PC-3 (cell line): ENCODE measurements at regions of chr5 and their contacts with region 1.

Region 1: GRCh38 chr5:112860929-112861637 is at the start of gene SRP19:
- DNase-seq: peak; percentile 94
- ATAC-seq: peak; percentile 91
- H3K4me3 ChIP-seq: peak within 1 kb of the TSS; percentile 98
- H3K27ac ChIP-seq: peak within 1 kb of the TSS; percentile 41
- H3K4me1 ChIP-seq: peaks cover 16% of the 10 kb centered on the region
- H3K27me3 ChIP-seq: no peaks in the 10 kb centered on the region
- CTCF ChIP-seq: no peak
- total RNA-seq, gene SRP19: 39.9 and 42.9 TPM in 2 replicates

Region 2: GRCh38 chr5:112711436-112711835 is 149.6 kb before region 1 on chr5:
- CTCF ChIA-PET with region 1: no interaction called
- POLR2A ChIA-PET with region 1: no interaction called
- intact Hi-C with region 1: no loop called
- DNase-seq: no peak
- ATAC-seq: no peak
- H3K4me3 ChIP-seq: no peak overlapping the region
- H3K27ac ChIP-seq: no peak overlapping the region
- H3K4me1 ChIP-seq: peaks cover 13% of the 10 kb centered on the region
- H3K27me3 ChIP-seq: no peaks in the 10 kb centered on the region
- CTCF ChIP-seq: no peak

Region 3: GRCh38 chr5:112976432-112977309 is 115.6 kb after region 1 on chr5 and contains the start of gene DCP2:
- CTCF ChIA-PET with region 1: no interaction called
- POLR2A ChIA-PET with region 1: no interaction called
- intact Hi-C with region 1: loop called (anchors 5 kb)
- DNase-seq: peak; percentile 96
- ATAC-seq: peak; percentile 96
- H3K4me3 ChIP-seq: peak within 1 kb of the TSS; percentile 99
- H3K27ac ChIP-seq: peak within 1 kb of the TSS; percentile 66
- H3K4me1 ChIP-seq: peaks cover 18% of the 10 kb centered on the region
- H3K27me3 ChIP-seq: no peaks in the 10 kb centered on the region
- CTCF ChIP-seq: no peak
- total RNA-seq, gene DCP2: 26.7 and 33.6 TPM in 2 replicates